Gastrocnemius medialis (tissue), 4 donors: ENCODE measurements at regions of chr13 and their contacts with region 1.

Region 1: DNA sequence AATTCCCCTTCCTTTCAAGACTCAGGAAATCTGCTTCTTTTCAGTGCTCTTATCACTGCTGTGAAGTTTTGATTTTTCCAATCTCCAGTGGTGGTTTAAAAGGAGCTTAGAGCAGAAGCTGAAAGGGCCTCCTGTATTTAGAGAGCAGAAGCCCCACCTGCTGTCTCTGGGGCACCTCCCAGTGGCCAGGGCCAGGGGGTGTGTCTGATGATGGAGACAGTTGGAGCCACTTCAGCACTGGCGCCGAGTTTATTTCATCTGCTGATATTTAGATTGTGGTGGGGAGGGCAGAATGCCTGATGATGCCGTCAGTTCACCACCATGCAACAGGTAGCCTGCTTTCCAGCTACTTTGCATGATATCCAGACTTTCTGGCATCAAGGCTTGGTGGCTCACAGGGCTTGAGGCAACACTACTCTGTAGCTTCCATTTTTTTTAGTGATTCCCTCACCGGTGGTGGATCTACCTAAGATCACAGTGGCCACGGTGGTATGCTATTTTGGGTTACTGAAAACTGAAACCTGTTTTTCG is 371.9 kb downstream of the KCNRG start:
- DNase-seq: peak; percentile 76 to 89
- ATAC-seq: peak; percentile 86 to 90
- H3K4me3 ChIP-seq: peak overlapping the region; percentile 46 to 55 (median 46)
- H3K27ac ChIP-seq: peak overlapping the region; percentile 91 to 96 (median 91)
- H3K4me1 ChIP-seq: peaks cover 18 to 33% of the 10 kb centered on the region in 2 donors
- H3K27me3 ChIP-seq: no peaks in the 10 kb centered on the region
- CTCF ChIP-seq: peak in 3 of 5 experiments; percentile 4 to 38 (median 24)
- POLR2A ChIP-seq: peak; percentile 49 to 78

Region 2: DNA sequence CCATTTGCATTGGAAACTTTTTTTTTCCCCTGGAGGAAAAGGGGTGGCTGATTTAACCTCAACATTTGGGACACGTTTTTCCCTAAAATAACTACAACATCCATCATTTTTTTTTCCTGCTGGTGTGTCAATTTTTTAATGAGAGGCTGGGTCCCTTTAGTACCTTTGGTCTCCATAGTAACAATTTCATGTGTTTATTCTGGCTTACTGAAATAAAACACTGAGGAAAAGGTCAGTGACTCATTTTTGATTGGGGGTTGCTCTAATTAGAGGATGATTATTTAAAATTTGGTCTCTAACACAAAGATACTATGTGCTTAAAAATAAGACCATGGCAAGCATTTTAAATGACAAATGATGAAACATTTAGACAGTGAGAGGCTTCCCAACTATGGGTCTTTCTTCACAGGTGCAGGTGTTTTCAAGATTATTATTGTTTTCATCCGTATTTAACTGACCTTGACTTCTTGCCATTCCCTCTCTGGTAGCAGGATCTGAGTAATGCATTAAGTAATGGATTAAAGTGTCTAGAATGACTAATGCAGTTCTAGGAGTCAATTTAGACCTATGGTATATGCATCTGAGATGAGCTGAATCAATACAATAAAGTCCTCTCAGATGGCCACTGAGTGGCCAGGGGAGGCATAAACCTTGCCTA is 34.5 kb after region 1 on chr13:
- in situ Hi-C with region 1: no loop called
- intact Hi-C with region 1: loop called (anchors 2 kb)
- DNase-seq: no peak
- ATAC-seq: no peak
- H3K4me3 ChIP-seq: no peak overlapping the region
- H3K27ac ChIP-seq: peak overlapping the region; percentile 74 to 89 (median 82)
- H3K4me1 ChIP-seq: peaks cover 57 to 64% of the 10 kb centered on the region in 2 donors
- H3K27me3 ChIP-seq: no peaks in the 10 kb centered on the region
- CTCF ChIP-seq: no peak
- POLR2A ChIP-seq: peak in 1 of 2 donors; percentile 1